ENCODE measurements at regions of chr5 and their contacts with region 1.

Region 1: DNA sequence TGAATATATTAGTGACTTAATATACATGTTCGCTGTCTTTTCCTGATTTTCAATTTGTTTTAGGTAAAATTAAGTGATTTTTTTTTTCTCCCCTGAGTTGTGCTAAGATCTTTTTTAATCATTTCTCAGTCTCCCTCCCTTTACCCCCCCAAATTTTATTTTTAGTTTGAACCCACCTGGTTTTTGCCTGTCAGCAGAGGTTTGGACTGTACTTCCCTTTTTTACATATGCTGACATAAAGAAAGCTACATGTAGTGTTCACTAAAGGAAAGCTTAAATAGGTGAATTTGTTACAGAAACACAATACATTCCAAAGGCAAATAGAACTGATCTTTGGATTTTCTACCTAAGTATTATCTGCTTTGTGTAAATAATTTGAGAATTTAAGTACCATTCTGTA is 82.2 kb downstream of the IPO11 start:
- DNase-seq: no peak
- ATAC-seq: no peak
- H3K4me3 ChIP-seq: no peak overlapping the region
- H3K27ac ChIP-seq: peak overlapping the region; percentile 12; the same call in 1 of the 2 replicates
- H3K4me1 ChIP-seq: no peaks in the 10 kb centered on the region
- H3K27me3 ChIP-seq: no peaks in the 10 kb centered on the region
- CTCF ChIP-seq: no peak
- EP300 ChIP-seq: no peak
- POLR2A ChIP-seq: no peak
- RAD21 ChIP-seq: no peak

Region 2: GRCh38 chr5:62483556-62483955 is 11.2 kb before region 1 on chr5:
- CTCF ChIA-PET with region 1: interaction called, 3 read pairs
- POLR2A ChIA-PET with region 1: no interaction called
- RAD21 ChIA-PET with region 1: no interaction called
- SMC1A ChIA-PET with region 1: interaction called, 13 read pairs
- in situ Hi-C with region 1: no loop called
- intact Hi-C with region 1: no loop called
- DNase-seq: no peak
- ATAC-seq: no peak
- H3K4me3 ChIP-seq: no peak overlapping the region
- H3K27ac ChIP-seq: no peak overlapping the region
- H3K4me1 ChIP-seq: no peaks in the 10 kb centered on the region
- H3K27me3 ChIP-seq: no peaks in the 10 kb centered on the region
- CTCF ChIP-seq: no peak
- EP300 ChIP-seq: no peak
- POLR2A ChIP-seq: no peak
- RAD21 ChIP-seq: no peak